ENCODE measurements at regions of chr5 and their contacts with region 1.

Region 1: DNA sequence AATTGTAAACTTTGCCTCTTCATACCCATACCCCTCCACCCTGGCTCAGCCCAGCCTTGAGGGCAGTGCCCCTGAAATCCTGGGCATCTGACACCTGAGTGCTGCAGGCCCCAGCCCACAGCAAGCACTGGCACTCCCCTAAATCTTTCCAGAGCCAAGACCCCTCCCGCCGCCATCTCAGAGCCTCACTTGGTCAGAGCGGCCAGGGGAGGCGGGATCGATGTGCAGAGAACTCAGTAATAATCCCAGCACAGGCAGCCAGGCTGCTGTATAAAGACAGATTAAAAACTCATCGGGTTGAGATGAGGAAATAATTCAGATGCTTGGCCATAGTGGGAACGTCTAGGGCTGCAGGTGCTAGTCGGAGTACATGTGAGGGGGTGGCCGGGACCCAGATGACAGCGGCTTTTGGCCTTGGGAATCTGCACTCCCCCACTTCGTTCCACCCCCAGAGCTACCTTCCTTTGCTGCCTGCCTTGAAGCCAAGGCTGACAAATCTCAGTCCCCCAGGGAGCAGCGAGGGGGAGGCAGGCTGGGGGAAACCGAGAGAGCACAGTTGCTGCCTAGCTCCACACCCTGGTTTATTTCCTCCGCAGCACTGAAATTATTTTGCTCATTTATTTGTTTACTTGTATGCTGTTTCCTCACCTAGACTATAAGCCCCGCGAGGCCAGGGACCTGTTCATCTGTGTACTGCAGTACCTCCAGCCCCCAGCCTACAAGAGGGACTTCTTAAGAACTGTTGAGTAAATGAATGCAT is 19.5 kb upstream of the ARAP3 start:
- DNase-seq: no peak
- H3K4me3 ChIP-seq: peak overlapping the region in 3 of 4 donors; percentile 56 to 67 (median 59)
- H3K27ac ChIP-seq: no peak overlapping the region
- H3K4me1 ChIP-seq: peaks cover 21 to 22% (median 22%) of the 10 kb centered on the region in 4 donors
- H3K27me3 ChIP-seq: peaks cover 0 to 84% (median 41%) of the 10 kb centered on the region in 4 donors
- CTCF ChIP-seq: no peak
- EP300 ChIP-seq: no peak
- POLR2A ChIP-seq: no peak

Region 2: DNA sequence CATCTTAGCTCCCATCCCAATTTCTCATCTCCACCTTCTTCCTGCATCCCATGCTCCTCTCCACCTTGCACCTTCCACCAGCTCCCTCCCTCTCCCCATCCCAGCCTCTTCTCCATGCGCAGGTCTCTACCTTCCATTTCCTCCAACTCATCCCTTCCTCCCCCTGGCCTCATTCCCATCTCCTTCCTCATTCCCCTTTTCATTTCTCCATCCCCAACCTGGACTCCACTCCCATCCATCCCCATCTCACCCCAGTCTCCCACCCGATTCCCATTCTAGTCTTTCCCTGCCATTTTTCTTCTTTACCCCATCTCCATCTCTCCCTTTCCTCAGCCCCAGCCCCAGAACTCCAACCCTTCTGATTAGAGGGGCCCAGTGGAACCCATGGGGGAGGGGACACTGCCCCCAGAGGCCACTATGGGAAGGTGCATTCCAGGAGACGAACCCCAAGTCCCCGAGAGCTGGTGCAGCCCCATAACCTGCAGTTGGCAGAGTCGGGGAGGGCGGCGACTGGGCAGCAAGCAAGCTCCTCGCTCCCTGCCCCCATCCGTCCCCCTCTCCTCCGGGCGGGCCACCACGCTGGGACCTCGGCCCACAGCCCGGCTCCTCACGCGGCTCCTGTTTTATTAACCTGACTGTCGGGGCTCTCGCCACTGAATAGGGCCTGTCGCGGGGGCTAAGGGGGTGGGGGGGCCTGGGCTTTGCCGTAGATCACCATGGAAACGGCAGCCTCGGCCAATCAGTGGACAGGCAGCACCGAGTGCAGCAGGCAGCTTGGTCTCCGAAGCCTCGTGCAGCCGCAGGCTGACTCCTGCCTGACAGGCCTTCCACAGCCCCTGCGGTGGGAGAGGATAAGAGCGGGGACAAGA is 110.0 kb after region 1 on chr5:
- intact Hi-C with region 1: loop called (anchors 10 kb)
- DNase-seq: no peak
- H3K4me3 ChIP-seq: peak overlapping the region in 1 of 4 donors; percentile 7
- H3K27ac ChIP-seq: no peak overlapping the region
- H3K4me1 ChIP-seq: peaks cover 15 to 33% (median 24%) of the 10 kb centered on the region in 4 donors
- H3K27me3 ChIP-seq: peaks cover 0 to 71% (median 3%) of the 10 kb centered on the region in 4 donors
- CTCF ChIP-seq: peak; percentile 5 to 54 (median 6)
- EP300 ChIP-seq: no peak
- POLR2A ChIP-seq: no peak

Measured in esophagus muscularis mucosa (tissue), 4 donors.